Natural killer cell (primary cell): ENCODE measurements at regions of chr19 and their contacts with region 1.

Region 1: GRCh38 chr19:57279418-57280066 is 743 bp upstream of the ZNF460 start:
- DNase-seq: peak; percentile 79 to 92
- ATAC-seq: peak; percentile 77 to 89 (median 78)
- H3K4me3 ChIP-seq: peak overlapping the region; percentile 55
- H3K4me3 Mint-ChIP-seq: no peak overlapping the region
- H3K27ac ChIP-seq: peak overlapping the region; percentile 97
- H3K27ac Mint-ChIP-seq: no peak overlapping the region
- H3K4me1 ChIP-seq: peaks cover 30% of the 10 kb centered on the region
- H3K4me1 Mint-ChIP-seq: peaks cover 21% of the 10 kb centered on the region in 2 donors
- H3K27me3 ChIP-seq: no peaks in the 10 kb centered on the region
- H3K27me3 Mint-ChIP-seq: no peaks in the 10 kb centered on the region
- CTCF ChIP-seq: no peak

Region 2: GRCh38 chr19:57191141-57192076 is 88.1 kb before region 1 on chr19 and contains the start of gene ZNF264:
- intact Hi-C with region 1: loop called (anchors 2 kb)
- DNase-seq: peak; percentile 88 to 93
- ATAC-seq: peak; percentile 85 to 94 (median 93)
- H3K4me3 ChIP-seq: peak within 1 kb of the TSS; percentile 67
- H3K4me3 Mint-ChIP-seq: peak within 1 kb of the TSS; percentile 93
- H3K27ac ChIP-seq: peak within 1 kb of the TSS; percentile 90
- H3K27ac Mint-ChIP-seq: peak within 1 kb of the TSS; percentile 90 to 94
- H3K4me1 ChIP-seq: peaks cover 20% of the 10 kb centered on the region
- H3K4me1 Mint-ChIP-seq: peaks cover 24 to 32% of the 10 kb centered on the region in 2 donors
- H3K27me3 ChIP-seq: peaks cover 8% of the 10 kb centered on the region
- H3K27me3 Mint-ChIP-seq: peaks cover 8 to 11% of the 10 kb centered on the region in 2 donors
- CTCF ChIP-seq: no peak
- total RNA-seq, gene ZNF264: 50.4 to 62.1 (median 54.2) TPM

Region 3: GRCh38 chr19:57240311-57241090 is 39.0 kb before region 1 on chr19 and contains the start of gene ZNF805:
- intact Hi-C with region 1: loop called (anchors 1 kb)
- DNase-seq: peak; percentile 89 to 98
- ATAC-seq: peak; percentile 92 to 97 (median 94)
- H3K4me3 ChIP-seq: peak within 1 kb of the TSS; percentile 78
- H3K4me3 Mint-ChIP-seq: peak within 1 kb of the TSS; percentile 95
- H3K27ac ChIP-seq: peak within 1 kb of the TSS; percentile 87
- H3K27ac Mint-ChIP-seq: peak within 1 kb of the TSS; percentile 94 to 96
- H3K4me1 ChIP-seq: peaks cover 22% of the 10 kb centered on the region
- H3K4me1 Mint-ChIP-seq: peaks cover 29 to 34% of the 10 kb centered on the region in 2 donors
- H3K27me3 ChIP-seq: no peaks in the 10 kb centered on the region
- H3K27me3 Mint-ChIP-seq: no peaks in the 10 kb centered on the region
- CTCF ChIP-seq: no peak
- total RNA-seq, gene ZNF805: 25.9 to 32.7 (median 31.0) TPM

Region 4: GRCh38 chr19:57320180-57321084 is 40.9 kb after region 1 on chr19 and contains the start of gene ZNF543:
- intact Hi-C with region 1: loop called (anchors 2 kb)
- DNase-seq: peak; percentile 94 to 96
- ATAC-seq: peak; percentile 95 to 99 (median 98)
- H3K4me3 ChIP-seq: peak within 1 kb of the TSS; percentile 81
- H3K4me3 Mint-ChIP-seq: peak within 1 kb of the TSS; percentile 94
- H3K27ac ChIP-seq: peak within 1 kb of the TSS; percentile 94
- H3K27ac Mint-ChIP-seq: peak within 1 kb of the TSS; percentile 95 to 99
- H3K4me1 ChIP-seq: peaks cover 24% of the 10 kb centered on the region
- H3K4me1 Mint-ChIP-seq: peaks cover 27 to 35% of the 10 kb centered on the region in 2 donors
- H3K27me3 ChIP-seq: peaks cover 13% of the 10 kb centered on the region
- H3K27me3 Mint-ChIP-seq: peaks cover 26% of the 10 kb centered on the region in 2 donors
- CTCF ChIP-seq: no peak
- total RNA-seq, gene ZNF543: 4.7 to 7.2 (median 5.9) TPM

Region 5: DNA sequence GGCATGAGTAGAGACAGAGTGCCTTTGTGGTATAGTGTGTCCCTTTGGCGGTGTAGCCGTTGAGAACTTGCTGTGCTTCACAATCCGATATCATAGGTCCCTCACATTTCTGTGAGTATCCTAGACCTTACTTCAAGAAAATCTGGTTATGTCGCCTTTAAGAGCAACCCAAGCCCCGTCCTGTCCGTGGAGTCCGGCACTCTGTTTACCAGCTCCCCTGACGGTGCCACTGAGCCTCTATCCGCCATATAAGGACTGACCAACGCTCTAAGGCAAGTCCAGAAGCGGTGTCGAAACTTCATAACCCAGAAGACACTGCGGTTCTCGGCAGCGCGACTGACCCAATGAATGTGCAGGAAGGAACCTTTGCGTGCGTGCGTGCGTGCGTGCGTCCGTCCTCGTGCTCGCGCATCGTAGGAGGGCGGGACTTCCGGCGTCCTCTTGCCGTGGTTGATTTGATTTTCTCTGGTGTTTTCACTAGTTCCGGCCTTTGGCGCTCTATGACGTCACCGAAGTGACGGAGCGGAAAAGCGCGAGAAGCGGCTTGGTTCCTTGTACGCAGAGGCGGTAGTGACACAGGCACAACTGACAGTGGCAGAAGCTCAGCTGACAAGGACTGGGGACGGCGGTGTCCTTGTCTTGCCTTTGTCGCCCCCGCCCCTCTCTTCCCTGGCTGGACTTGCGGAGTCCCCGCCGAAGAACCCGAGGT is 83.6 kb after region 1 on chr19 and contains the starts of genes TRAPPC2B and ZNF547:
- intact Hi-C with region 1: loop called (anchors 1 kb)
- DNase-seq: peak; percentile 99 to 100
- ATAC-seq: peak; percentile 88 to 96 (median 90)
- H3K4me3 ChIP-seq: peak within 1 kb of the TSS; percentile 56
- H3K4me3 Mint-ChIP-seq: peak within 1 kb of the TSS; percentile 92
- H3K27ac ChIP-seq: peak within 1 kb of the TSS; percentile 93
- H3K27ac Mint-ChIP-seq: peak within 1 kb of the TSS; percentile 96 to 98
- H3K4me1 ChIP-seq: peaks cover 14% of the 10 kb centered on the region
- H3K4me1 Mint-ChIP-seq: peaks cover 18 to 19% of the 10 kb centered on the region in 2 donors
- H3K27me3 ChIP-seq: no peaks in the 10 kb centered on the region
- H3K27me3 Mint-ChIP-seq: no peaks in the 10 kb centered on the region
- CTCF ChIP-seq: no peak
- total RNA-seq, gene TRAPPC2B: 7.4 to 15.6 (median 13.7) TPM
- total RNA-seq, gene ZNF547: 0.48 to 1.2 (median 0.92) TPM

Region 6: GRCh38 chr19:57410877-57411671 is 131.5 kb after region 1 on chr19 and contains the start of gene ZNF17:
- intact Hi-C with region 1: loop called (anchors 1 kb)
- DNase-seq: peak; percentile 84 to 96
- ATAC-seq: peak; percentile 99 to 100 (median 100)
- H3K4me3 ChIP-seq: peak within 1 kb of the TSS; percentile 86
- H3K4me3 Mint-ChIP-seq: peak within 1 kb of the TSS; percentile 94
- H3K27ac ChIP-seq: peak within 1 kb of the TSS; percentile 62
- H3K27ac Mint-ChIP-seq: peak within 1 kb of the TSS; percentile 84
- H3K4me1 ChIP-seq: peaks cover 18% of the 10 kb centered on the region
- H3K4me1 Mint-ChIP-seq: peaks cover 29 to 37% of the 10 kb centered on the region in 2 donors
- H3K27me3 ChIP-seq: no peaks in the 10 kb centered on the region
- H3K27me3 Mint-ChIP-seq: no peaks in the 10 kb centered on the region
- CTCF ChIP-seq: no peak
- total RNA-seq, gene ZNF17: 13.0 to 15.0 (median 13.3) TPM

Region 7: GRCh38 chr19:57578487-57579205 is 299.1 kb after region 1 on chr19 and contains the start of gene ZNF416:
- intact Hi-C with region 1: no loop called
- DNase-seq: peak; percentile 88 to 99
- ATAC-seq: peak; percentile 98
- H3K4me3 ChIP-seq: peak within 1 kb of the TSS; percentile 52
- H3K4me3 Mint-ChIP-seq: peak within 1 kb of the TSS; percentile 85
- H3K27ac ChIP-seq: peak within 1 kb of the TSS; percentile 36
- H3K27ac Mint-ChIP-seq: peak within 1 kb of the TSS; percentile 83 to 91
- H3K4me1 ChIP-seq: peaks cover 15% of the 10 kb centered on the region
- H3K4me1 Mint-ChIP-seq: peaks cover 26 to 27% of the 10 kb centered on the region in 2 donors
- H3K27me3 ChIP-seq: no peaks in the 10 kb centered on the region
- H3K27me3 Mint-ChIP-seq: no peaks in the 10 kb centered on the region
- CTCF ChIP-seq: no peak
- total RNA-seq, gene ZNF416: 1.7 to 5.3 (median 3.3) TPM